PC-9 (cell line): ENCODE measurements at regions of chr4 and their contacts with region 1.

Region 1: DNA sequence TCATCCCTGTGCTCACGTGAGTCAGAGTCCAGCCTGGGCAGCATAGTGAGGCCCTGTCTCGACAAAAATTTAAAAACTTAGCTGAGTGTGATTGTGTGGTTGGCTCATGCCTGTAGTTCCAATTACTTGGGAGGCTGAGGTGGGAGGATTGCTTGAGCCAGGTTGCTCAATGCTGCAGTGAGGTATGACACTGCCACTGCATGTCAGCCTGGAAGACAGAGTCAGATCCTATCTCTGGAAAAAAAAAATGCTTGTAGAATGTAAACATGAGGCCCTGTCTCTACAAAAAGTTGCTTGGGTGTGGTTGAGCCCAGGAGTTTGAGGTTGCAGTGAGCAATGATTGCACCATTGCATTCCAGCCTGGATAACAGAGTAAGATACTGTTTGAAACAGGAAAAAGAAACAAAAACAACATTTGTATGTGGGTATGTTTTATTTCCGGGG is 11.3 kb upstream of the YTHDC1 start:
- DNase-seq: peak; percentile 49 to 89
- H3K4me3 ChIP-seq: no peak overlapping the region
- H3K27ac ChIP-seq: peak overlapping the region; percentile 82
- H3K4me1 ChIP-seq: peaks cover 16% of the 10 kb centered on the region
- H3K27me3 ChIP-seq: no peaks in the 10 kb centered on the region
- CTCF ChIP-seq: no peak

Region 2: GRCh38 chr4:68324519-68325262 is 36.5 kb before region 1 on chr4:
- CTCF ChIA-PET with region 1: no interaction called
- POLR2A ChIA-PET with region 1: no interaction called
- intact Hi-C with region 1: no loop called
- DNase-seq: no peak
- H3K4me3 ChIP-seq: no peak overlapping the region
- H3K27ac ChIP-seq: no peak overlapping the region
- H3K4me1 ChIP-seq: no peaks in the 10 kb centered on the region
- H3K27me3 ChIP-seq: no peaks in the 10 kb centered on the region
- CTCF ChIP-seq: no peak

Region 3: GRCh38 chr4:68349649-68350360 is 11.4 kb before region 1 on chr4 and contains the start of gene YTHDC1:
- CTCF ChIA-PET with region 1: no interaction called
- POLR2A ChIA-PET with region 1: no interaction called
- intact Hi-C with region 1: loop called (anchors 1 kb)
- DNase-seq: peak; percentile 87 to 88
- H3K4me3 ChIP-seq: peak within 1 kb of the TSS; percentile 86
- H3K27ac ChIP-seq: peak within 1 kb of the TSS; percentile 89
- H3K4me1 ChIP-seq: peaks cover 23% of the 10 kb centered on the region
- H3K27me3 ChIP-seq: no peaks in the 10 kb centered on the region
- CTCF ChIP-seq: no peak
- total RNA-seq, gene YTHDC1: 64.1 and 83.6 TPM in 2 replicates

Region 4: DNA sequence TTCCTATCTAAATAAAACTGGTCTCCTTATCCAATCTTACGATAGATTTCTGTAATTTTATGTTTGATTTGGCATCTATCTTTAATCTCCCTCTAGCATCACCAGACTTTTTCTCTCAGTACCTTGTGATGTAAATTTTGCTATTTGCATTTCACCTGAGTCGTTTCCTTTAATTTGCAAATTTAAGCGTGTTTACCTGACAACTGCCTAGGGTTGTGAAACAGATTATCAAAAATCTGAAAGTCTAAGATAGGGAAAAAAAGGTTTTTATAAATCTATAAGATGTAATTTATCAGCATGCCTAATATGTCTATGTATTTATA is 46.7 kb after region 1 on chr4:
- CTCF ChIA-PET with region 1: no interaction called
- POLR2A ChIA-PET with region 1: no interaction called
- intact Hi-C with region 1: no loop called
- DNase-seq: no peak
- H3K4me3 ChIP-seq: no peak overlapping the region
- H3K27ac ChIP-seq: no peak overlapping the region
- H3K4me1 ChIP-seq: peaks cover 8% of the 10 kb centered on the region; the same call in 1 of the 2 replicates
- H3K27me3 ChIP-seq: no peaks in the 10 kb centered on the region
- CTCF ChIP-seq: no peak